Heart right ventricle (tissue), 16 donors: ENCODE measurements at regions of chr6 and their contacts with region 1.

Region 1: DNA sequence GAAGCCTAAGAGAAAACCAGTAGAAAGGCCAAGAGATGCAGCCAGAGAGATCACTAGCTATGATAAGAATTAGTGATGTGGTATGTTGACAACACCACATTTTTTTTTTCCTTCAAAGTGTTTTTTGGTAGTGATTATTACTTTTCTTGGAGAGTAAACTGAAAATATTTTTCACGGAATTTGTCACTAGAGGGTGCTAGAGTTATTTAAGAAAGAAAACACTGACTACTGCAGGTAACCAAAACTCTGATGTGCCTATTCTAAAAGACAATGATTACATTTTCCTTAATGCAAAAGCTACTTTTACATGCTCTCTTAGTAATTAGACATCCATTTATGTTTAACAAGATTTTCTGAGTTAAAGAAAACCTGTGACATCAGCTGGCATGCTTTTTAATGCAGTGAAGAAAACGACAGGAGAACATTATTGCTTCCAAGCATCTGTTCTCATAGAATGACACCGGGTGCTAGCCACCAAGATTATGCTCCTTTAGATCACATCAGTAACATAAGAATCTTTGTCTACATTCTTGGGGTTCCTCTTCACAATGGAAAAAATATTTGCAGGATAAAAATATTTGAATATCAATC is 28.8 kb downstream of the RWDD2A start:
- DNase-seq: no peak
- ATAC-seq: no peak
- H3K4me3 ChIP-seq: no peak overlapping the region
- H3K27ac ChIP-seq: no peak overlapping the region
- H3K4me1 ChIP-seq: no peaks in the 10 kb centered on the region
- H3K27me3 ChIP-seq: no peaks in the 10 kb centered on the region
- CTCF ChIP-seq: peak in 8 of 9 donors; percentile 23 to 75 (median 56)

Region 2: GRCh38 chr6:83247471-83247870 is 25.5 kb after region 1 on chr6:
- intact Hi-C with region 1: no loop called
- DNase-seq: no peak
- ATAC-seq: no peak
- H3K4me3 ChIP-seq: no peak overlapping the region
- H3K27ac ChIP-seq: no peak overlapping the region
- H3K4me1 ChIP-seq: no peaks in the 10 kb centered on the region
- H3K27me3 ChIP-seq: no peaks in the 10 kb centered on the region
- CTCF ChIP-seq: no peak

Region 3: DNA sequence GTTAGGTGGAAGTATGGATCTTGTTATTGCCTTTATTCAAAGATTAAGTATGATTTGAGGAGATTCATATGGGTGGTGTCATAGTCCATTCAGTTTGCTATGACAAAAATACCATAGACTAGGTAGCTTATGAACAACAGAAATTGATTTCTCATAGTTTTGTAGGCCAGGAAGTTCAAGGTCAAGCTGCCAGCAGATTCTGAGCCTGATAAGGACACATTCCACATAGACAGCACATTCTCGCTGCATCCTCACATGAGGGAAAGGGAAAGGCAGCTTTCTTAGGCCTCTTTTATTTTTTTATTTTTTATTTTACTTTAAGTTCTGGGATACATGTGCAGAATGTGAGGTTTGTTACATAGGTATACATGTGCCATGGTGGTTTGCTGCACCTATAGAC is 181.2 kb after region 1 on chr6:
- intact Hi-C with region 1: loop called in 1 of 10 experiments (anchors 10 kb)
- DNase-seq: no peak
- ATAC-seq: no peak
- H3K4me3 ChIP-seq: no peak overlapping the region
- H3K27ac ChIP-seq: no peak overlapping the region
- H3K4me1 ChIP-seq: no peaks in the 10 kb centered on the region
- H3K27me3 ChIP-seq: no peaks in the 10 kb centered on the region
- CTCF ChIP-seq: no peak

Region 4: GRCh38 chr6:83417880-83418663 is 196.1 kb after region 1 on chr6:
- intact Hi-C with region 1: loop called in 3 of 10 experiments (anchors 10 kb)
- DNase-seq: no peak
- ATAC-seq: peak in 3 of 8 donors; percentile 41 to 62 (median 55)
- H3K4me3 ChIP-seq: no peak overlapping the region
- H3K27ac ChIP-seq: no peak overlapping the region
- H3K4me1 ChIP-seq: no peaks in the 10 kb centered on the region
- H3K27me3 ChIP-seq: no peaks in the 10 kb centered on the region
- CTCF ChIP-seq: peak in 8 of 9 donors; percentile 14 to 63 (median 54)